HEK293 (cell line): ENCODE measurements at regions of chr13 and their contacts with region 1.

Region 1: DNA sequence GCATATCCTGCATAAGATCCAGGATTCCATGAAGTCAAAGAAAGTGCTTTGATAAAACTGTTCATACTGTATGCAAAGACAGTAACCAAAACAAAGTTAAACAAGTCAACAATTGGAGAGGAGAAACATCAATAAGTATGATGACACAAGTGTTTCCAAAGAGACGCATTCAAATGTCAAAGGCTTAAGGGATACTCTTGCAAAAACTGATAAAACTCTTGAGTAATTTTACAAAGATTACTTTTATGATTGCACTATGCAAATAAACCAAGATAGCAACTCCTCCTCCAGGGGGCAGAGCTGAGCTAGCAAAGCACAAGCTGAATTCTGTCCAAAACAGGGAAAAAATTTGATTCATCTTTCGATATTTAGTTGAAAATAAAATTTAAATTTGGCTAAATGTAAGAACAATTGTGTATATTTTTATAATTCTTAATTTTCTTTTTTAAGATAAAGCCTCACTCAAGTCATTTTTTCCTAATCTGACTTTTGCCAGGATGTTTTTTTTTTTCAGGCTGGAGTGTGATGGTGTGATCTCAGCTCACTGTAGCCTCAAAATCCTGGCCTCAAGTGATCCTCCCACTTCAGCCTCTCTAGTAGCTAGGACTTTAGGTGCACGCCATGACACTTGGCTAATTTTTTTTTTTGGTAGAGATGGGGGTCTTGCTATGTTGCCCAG is 84.0 kb downstream of the MZT1 start:
- H3K4me3 ChIP-seq: no peak overlapping the region
- H3K27ac ChIP-seq: no peak overlapping the region
- H3K4me1 ChIP-seq: no peaks in the 10 kb centered on the region
- CTCF ChIP-seq: no peak

Region 2: DNA sequence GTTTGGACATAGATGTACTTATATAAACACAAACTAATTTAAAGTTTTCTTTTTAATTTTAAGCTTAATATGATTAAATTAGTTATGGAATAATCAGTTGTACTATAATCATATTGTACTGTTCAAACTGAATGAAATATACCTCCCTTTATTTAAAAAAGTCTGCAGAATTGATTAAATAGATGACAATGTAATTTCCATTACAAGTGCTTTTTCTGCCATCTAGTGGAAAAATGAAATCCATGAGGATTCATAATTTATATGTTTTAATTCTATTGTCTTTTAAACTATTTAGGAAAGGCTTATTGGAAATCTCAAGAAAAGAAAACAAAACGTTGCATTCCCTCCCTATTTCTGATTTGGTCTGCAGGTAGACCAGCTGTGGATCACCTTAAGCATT is 53.1 kb after region 1 on chr13:
- CTCF ChIA-PET with region 1: interaction called, 12 read pairs
- POLR2A ChIA-PET with region 1: no interaction called
- H3K4me3 ChIP-seq: no peak overlapping the region
- H3K27ac ChIP-seq: no peak overlapping the region
- H3K4me1 ChIP-seq: no peaks in the 10 kb centered on the region
- CTCF ChIP-seq: no peak

Region 3: DNA sequence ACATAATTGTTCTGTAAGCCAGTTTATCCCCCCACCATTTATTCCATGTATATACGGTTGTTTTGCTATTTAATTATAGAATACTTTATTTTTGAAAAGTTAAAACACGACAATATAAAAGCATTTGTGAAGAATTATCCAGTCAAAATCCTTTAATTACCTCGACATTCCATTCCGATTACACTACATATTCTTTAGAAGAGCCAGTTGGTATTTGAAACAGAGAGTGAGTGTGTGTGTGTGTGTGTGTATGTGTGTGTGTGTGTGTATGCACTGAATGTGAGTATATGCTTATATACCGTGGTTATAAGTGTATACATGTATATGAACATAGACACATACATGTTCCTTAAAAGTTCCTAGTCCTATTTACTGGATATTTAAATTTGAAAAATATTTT is 327.5 kb after region 1 on chr13:
- CTCF ChIA-PET with region 1: no interaction called
- POLR2A ChIA-PET with region 1: no interaction called
- H3K4me3 ChIP-seq: no peak overlapping the region
- H3K27ac ChIP-seq: no peak overlapping the region
- H3K4me1 ChIP-seq: no peaks in the 10 kb centered on the region
- CTCF ChIP-seq: no peak